Heart right ventricle (tissue), 16 donors: ENCODE measurements at regions of chr10 and their contacts with region 1.

Region 1: GRCh38 chr10:17607603-17608332 is 9.4 kb downstream of the HACD1 start:
- DNase-seq: peak in 1 of 2 donors; percentile 42
- ATAC-seq: peak in 7 of 8 donors; percentile 76 to 89 (median 79)
- H3K4me3 ChIP-seq: no peak overlapping the region
- H3K27ac ChIP-seq: peak overlapping the region in 2 of 10 donors; percentile 0 to 5
- H3K4me1 ChIP-seq: peaks cover 0 to 23% (median 14%) of the 10 kb centered on the region in 9 donors
- H3K27me3 ChIP-seq: no peaks in the 10 kb centered on the region
- CTCF ChIP-seq: peak; percentile 79 to 94 (median 89)

Region 2: DNA sequence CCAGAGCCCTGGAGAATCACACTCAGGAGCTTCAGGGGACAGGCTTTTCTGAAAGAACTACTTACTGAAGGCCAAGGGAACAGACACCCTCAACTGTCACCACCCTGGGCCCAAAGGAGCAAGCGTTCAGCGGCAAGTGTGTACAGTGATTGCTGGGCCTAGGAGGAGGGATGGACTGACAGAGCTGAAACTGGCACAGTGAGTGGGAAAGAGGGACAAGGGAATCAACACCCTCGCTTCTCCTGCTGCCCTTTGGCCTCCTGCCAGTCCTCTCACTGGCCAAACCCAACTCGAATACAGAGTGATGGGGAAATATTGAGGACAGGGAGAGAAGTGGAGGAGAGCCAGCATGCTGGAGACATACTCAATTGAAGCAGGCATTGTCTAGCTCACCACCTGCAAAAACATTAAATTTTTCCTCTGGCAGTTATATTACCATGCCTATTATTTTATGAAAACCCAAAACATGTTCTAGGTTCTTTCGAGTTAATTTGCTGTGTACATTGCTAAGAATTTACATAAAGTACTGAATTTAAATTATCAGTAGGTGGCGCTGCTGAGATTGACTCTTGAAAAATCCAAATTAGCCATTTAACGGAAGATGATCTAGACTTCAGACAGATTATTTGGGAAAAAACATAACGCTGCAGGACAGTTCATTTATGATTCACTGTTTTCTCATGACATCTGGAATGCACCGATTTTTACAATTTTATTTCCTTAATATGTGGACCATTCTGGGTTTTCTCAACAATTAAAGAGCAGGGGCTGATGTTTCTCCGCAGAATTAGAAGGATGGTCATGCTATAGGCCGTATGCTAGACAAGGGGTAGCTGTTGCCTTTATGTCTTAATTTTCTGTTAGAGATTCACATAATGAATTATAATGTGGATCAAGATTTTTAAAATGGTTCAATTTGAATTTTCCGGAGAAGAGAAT is 129.5 kb after region 1 on chr10:
- intact Hi-C with region 1: loop called in 7 of 10 experiments (anchors 2 to 5 kb)
- DNase-seq: peak; percentile 29 to 53
- ATAC-seq: peak in 7 of 8 donors; percentile 29 to 59 (median 43)
- H3K4me3 ChIP-seq: no peak overlapping the region
- H3K27ac ChIP-seq: peak overlapping the region in 7 of 10 donors; percentile 11 to 78 (median 29)
- H3K4me1 ChIP-seq: peaks cover 4 to 35% (median 19%) of the 10 kb centered on the region in 9 donors
- H3K27me3 ChIP-seq: no peaks in the 10 kb centered on the region
- CTCF ChIP-seq: peak; percentile 23 to 77 (median 67)

Region 3: DNA sequence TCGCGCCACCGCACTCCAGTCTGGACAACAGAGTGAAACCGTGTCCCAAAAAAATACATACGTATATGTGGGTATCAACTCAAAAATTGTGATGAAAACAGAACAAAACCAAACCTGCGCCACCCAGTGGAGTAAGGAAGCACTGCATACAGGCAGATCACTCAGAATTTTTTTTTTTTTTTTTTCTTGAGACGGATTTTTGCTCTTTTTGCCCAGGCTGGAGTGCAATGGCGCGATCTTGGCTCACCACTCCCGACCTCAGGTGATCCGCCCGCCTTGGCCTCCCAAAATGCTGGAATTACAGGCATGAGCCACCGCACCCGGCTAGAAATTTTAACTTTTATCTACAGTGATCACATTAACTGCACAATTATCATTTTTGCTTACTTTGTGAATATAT is 135.2 kb after region 1 on chr10:
- intact Hi-C with region 1: loop called (anchors 1 to 5 kb)
- DNase-seq: peak; percentile 48 to 58
- ATAC-seq: no peak
- H3K4me3 ChIP-seq: peak overlapping the region in 2 of 10 donors; percentile 5 to 23
- H3K27ac ChIP-seq: peak overlapping the region in 1 of 10 donors; percentile 66
- H3K4me1 ChIP-seq: peaks cover 0 to 28% (median 13%) of the 10 kb centered on the region in 9 donors
- H3K27me3 ChIP-seq: no peaks in the 10 kb centered on the region
- CTCF ChIP-seq: peak; percentile 80 to 90 (median 86)

Region 4: GRCh38 chr10:18104223-18104872 is 496.6 kb after region 1 on chr10:
- intact Hi-C with region 1: loop called in 7 of 10 experiments (anchors 5 to 10 kb)
- DNase-seq: peak; percentile 30 to 50
- ATAC-seq: no peak
- H3K4me3 ChIP-seq: no peak overlapping the region
- H3K27ac ChIP-seq: no peak overlapping the region
- H3K4me1 ChIP-seq: no peaks in the 10 kb centered on the region
- H3K27me3 ChIP-seq: no peaks in the 10 kb centered on the region
- CTCF ChIP-seq: peak; percentile 35 to 78 (median 70)

Region 5: DNA sequence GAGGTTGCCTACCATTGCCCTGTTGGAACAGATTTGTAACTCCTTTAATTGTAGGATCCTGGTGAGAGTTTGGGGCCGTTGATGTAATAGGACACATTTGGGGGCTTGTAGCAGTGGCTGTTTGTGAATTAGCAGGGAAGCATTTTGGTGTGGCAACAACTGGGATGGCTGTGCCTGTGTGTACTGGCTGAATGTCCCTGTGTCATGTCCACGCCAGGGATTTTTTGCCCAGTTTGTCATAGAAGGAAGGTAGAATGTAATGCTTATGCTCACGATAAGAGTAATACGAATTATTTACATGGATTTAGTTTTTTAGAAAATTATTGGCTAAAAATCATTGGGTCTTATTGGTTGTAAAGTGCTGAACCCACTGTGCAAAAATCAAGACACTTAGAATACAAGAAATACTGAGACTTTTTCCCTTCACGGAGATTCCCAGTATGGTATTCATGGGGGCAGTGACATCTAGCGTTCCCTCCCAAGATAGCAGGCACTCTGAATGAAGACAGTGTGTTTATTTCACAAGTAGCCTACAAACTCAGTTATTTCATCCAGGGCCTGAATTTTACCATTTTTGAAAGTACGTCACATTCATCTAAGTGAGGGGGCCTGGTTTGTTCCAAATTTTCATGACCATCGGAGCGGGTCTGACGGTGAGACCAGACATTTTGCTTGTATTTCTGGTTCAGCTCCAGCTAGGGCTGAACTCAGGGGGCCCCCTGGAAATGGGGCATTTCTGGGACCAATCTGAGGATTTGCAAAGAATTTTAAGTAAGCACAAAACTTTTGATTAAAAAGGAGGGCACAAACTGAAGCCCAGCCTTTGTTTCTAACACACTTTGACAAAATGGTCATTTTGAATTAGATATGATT is 607.2 kb after region 1 on chr10:
- intact Hi-C with region 1: loop called in 5 of 10 experiments (anchors 5 to 10 kb)
- DNase-seq: peak in 1 of 2 donors; percentile 38
- ATAC-seq: peak; percentile 63 to 77 (median 70)
- H3K4me3 ChIP-seq: no peak overlapping the region
- H3K27ac ChIP-seq: no peak overlapping the region
- H3K4me1 ChIP-seq: peaks cover 0 to 35% (median 13%) of the 10 kb centered on the region in 9 donors
- H3K27me3 ChIP-seq: no peaks in the 10 kb centered on the region
- CTCF ChIP-seq: peak; percentile 56 to 91 (median 76)

Region 6: DNA sequence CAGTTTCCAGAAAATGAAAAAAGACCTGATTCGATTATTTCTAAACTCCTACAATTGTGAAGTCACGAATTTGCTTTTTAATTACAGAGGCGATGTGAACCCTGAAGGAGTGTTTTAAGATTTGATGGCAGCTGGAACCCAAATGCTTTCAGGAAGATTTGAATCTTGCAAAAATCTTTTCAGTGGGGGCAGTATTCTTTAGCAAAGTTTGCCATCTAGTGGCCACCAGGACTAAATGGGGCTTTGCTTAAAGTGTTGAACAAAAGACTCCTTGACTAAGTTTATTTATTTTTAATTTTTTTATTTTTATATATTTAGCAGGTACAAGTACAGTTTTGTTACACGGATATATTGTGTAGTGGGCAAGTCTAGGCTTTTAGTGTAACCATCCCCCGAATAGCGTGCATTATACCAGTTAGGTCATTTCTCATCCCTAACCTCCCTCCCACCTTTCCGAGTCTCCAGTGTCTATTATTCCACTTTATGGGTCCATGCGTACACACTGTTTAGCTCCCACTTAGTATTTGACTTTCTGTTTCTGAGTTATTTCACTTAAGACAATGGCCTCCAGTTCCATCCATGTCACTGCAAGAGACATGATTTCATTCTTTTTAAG is 631.2 kb after region 1 on chr10:
- intact Hi-C with region 1: loop called in 1 of 10 experiments (anchors 10 kb)
- DNase-seq: no peak
- ATAC-seq: peak in 1 of 8 donors; percentile 15
- H3K4me3 ChIP-seq: no peak overlapping the region
- H3K27ac ChIP-seq: peak overlapping the region in 1 of 10 donors; percentile 26
- H3K4me1 ChIP-seq: peaks cover 0 to 16% (median 0%) of the 10 kb centered on the region in 9 donors
- H3K27me3 ChIP-seq: peaks cover 0 to 3% (median 0%) of the 10 kb centered on the region in 7 donors
- CTCF ChIP-seq: peak; percentile 29 to 75 (median 64)